ENCODE measurements at regions of chr15 and their contacts with region 1.

Region 1: DNA sequence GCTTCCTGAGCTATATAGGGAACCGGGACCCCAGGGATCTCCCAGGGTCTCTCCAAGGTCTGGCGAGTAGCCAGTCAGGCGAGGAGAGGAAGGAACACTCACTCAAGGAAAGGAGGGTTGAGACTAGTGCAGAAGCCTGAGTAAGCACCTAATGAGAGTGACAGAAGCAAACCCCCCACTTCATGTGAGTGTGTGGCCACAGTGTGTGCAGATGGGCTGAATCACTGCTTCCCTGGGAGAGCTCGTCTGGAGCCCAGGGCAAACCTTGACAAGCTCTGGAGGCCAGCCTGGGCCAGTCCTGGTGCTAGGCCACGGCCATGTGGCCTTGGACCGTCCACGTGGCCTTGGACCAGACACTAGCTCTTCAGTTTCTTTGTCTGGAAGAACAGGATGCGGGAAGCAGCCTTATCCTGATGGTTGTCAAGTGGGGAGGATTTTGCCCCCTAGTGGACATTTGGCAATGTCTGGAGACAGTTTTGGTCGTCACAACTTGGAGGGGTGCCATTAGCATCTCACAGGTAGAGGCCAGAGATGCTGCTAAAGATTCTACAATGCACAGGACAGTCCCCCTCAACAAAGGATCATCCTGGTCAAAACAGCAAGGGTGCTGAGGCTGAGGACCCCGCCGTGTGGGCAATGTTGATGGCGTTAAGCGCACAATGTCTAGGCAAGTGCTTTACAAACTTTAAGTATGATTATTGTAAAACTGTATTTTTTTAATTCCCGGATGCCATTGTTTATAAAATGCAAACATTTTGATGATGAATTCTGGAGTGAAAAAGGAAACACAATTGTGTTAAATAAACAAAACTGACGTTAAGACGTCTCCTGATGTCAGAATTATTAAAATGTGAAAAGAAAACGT is 34.8 kb upstream of the CTSH start:
- DNase-seq: peak; percentile 81 to 88
- H3K4me3 ChIP-seq: no peak overlapping the region
- H3K27ac ChIP-seq: no peak overlapping the region
- H3K4me1 ChIP-seq: peaks cover 0 to 15% (median 5%) of the 10 kb centered on the region in 4 donors
- H3K27me3 ChIP-seq: no peaks in the 10 kb centered on the region
- CTCF ChIP-seq: peak in 5 of 7 experiments; percentile 36 to 69 (median 63)
- EP300 ChIP-seq: no peak
- POLR2A ChIP-seq: no peak

Region 2: GRCh38 chr15:78872972-78873792 is 106.5 kb before region 1 on chr15:
- intact Hi-C with region 1: no loop called
- DNase-seq: peak; percentile 78 to 96
- H3K4me3 ChIP-seq: peak overlapping the region; percentile 69 to 99 (median 84)
- H3K27ac ChIP-seq: peak overlapping the region; percentile 98 to 100 (median 100)
- H3K4me1 ChIP-seq: peaks cover 32 to 46% (median 40%) of the 10 kb centered on the region in 4 donors
- H3K27me3 ChIP-seq: no peaks in the 10 kb centered on the region
- CTCF ChIP-seq: peak in 2 of 7 experiments; percentile 7 to 41
- EP300 ChIP-seq: no peak
- POLR2A ChIP-seq: peak in 1 of 4 donors; percentile 76

Region 3: DNA sequence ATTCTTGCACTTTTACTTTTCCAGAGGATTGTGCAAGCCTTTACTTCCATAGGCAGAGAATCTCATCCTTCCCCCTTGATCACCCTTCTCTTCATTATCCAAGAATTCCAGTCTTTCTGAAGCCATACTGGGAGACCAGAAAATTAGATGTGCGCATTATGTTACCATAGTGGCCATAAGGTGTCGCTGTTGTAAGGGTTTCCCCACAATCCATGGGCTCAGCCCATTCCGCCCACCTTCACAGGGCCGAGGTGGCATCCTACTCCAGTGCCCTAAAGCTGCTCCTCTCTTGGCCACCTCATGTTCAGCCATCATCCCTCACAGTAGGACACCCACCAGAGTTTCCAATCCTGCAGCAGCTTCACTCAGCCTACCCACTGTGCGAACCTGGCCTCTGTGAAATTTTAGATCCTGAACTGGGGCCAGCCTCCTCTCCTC is 69.9 kb before region 1 on chr15:
- intact Hi-C with region 1: loop called (anchors 10 kb)
- DNase-seq: peak in 1 of 2 donors; percentile 78
- H3K4me3 ChIP-seq: no peak overlapping the region
- H3K27ac ChIP-seq: peak overlapping the region in 1 of 5 donors; percentile 1
- H3K4me1 ChIP-seq: peaks cover 10 to 94% (median 39%) of the 10 kb centered on the region in 4 donors
- H3K27me3 ChIP-seq: no peaks in the 10 kb centered on the region
- CTCF ChIP-seq: peak in 5 of 7 experiments; percentile 30 to 67 (median 62)
- EP300 ChIP-seq: no peak
- POLR2A ChIP-seq: no peak